ENCODE measurements at regions of chr17 and their contacts with region 1.

Region 1: GRCh38 chr17:75601057-75602051 is 13.8 kb downstream of the MYO15B start:
- DNase-seq: peak; percentile 30
- H3K4me3 ChIP-seq: no peak overlapping the region
- H3K27ac ChIP-seq: no peak overlapping the region
- H3K4me1 ChIP-seq: no peaks in the 10 kb centered on the region
- H3K27me3 ChIP-seq: no peaks in the 10 kb centered on the region
- CTCF ChIP-seq: peak; percentile 61 to 81
- POLR2A ChIP-seq: no peak

Region 2: GRCh38 chr17:75509528-75510258 is 91.7 kb before region 1 on chr17:
- CTCF ChIA-PET with region 1: no interaction called
- POLR2A ChIA-PET with region 1: no interaction called
- dilution Hi-C with region 1: no loop called
- intact Hi-C with region 1: no loop called
- DNase-seq: peak; percentile 32
- H3K4me3 ChIP-seq: no peak overlapping the region
- H3K27ac ChIP-seq: peak overlapping the region; percentile 22
- H3K4me1 ChIP-seq: peaks cover 53% of the 10 kb centered on the region
- H3K27me3 ChIP-seq: no peaks in the 10 kb centered on the region
- CTCF ChIP-seq: no peak
- POLR2A ChIP-seq: no peak

Region 3: GRCh38 chr17:75589012-75589918 is 12.1 kb before region 1 on chr17:
- CTCF ChIA-PET with region 1: interaction called, 29 read pairs
- POLR2A ChIA-PET with region 1: interaction called, 3 read pairs
- dilution Hi-C with region 1: no loop called
- intact Hi-C with region 1: no loop called
- DNase-seq: peak; percentile 74
- H3K4me3 ChIP-seq: peak overlapping the region in 2 of 3 experiments; percentile 48 to 55
- H3K27ac ChIP-seq: peak overlapping the region; percentile 68
- H3K4me1 ChIP-seq: peaks cover 3% of the 10 kb centered on the region
- H3K27me3 ChIP-seq: no peaks in the 10 kb centered on the region
- CTCF ChIP-seq: peak; percentile 38 to 47
- POLR2A ChIP-seq: peak; percentile 42

Region 4: DNA sequence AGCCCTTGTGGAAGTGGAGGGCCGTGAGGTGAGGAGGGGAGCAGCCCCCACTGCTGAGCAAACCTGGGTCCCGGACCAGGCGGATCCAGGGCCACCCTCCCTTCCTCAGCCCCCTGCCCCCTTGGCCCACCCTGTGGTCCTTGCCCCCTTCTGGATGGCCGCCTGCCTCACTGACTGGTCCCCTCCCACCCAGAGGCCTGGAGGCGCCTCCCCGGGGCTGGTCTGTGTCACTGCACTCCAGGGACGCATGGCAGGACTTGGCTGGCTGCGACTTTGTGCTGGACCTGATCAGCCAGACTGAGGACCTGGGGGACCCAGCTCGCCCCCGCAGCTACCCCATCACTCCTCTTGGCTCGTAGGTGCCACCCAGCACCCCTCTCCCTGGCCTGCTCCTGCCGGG is 12.7 kb after region 1 on chr17:
- CTCF ChIA-PET with region 1: interaction called, 22 read pairs
- POLR2A ChIA-PET with region 1: interaction called, 10 read pairs
- dilution Hi-C with region 1: no loop called
- intact Hi-C with region 1: no loop called
- DNase-seq: no peak
- H3K4me3 ChIP-seq: no peak overlapping the region
- H3K27ac ChIP-seq: no peak overlapping the region
- H3K4me1 ChIP-seq: no peaks in the 10 kb centered on the region
- H3K27me3 ChIP-seq: no peaks in the 10 kb centered on the region
- CTCF ChIP-seq: peak in 1 of 2 donors; percentile 9
- POLR2A ChIP-seq: no peak

Region 5: GRCh38 chr17:75619506-75620431 is 18.4 kb after region 1 on chr17:
- CTCF ChIA-PET with region 1: interaction called, 22 read pairs
- POLR2A ChIA-PET with region 1: interaction called, 10 read pairs
- dilution Hi-C with region 1: no loop called
- intact Hi-C with region 1: no loop called
- DNase-seq: peak; percentile 32
- H3K4me3 ChIP-seq: no peak overlapping the region
- H3K27ac ChIP-seq: no peak overlapping the region
- H3K4me1 ChIP-seq: no peaks in the 10 kb centered on the region
- H3K27me3 ChIP-seq: no peaks in the 10 kb centered on the region
- CTCF ChIP-seq: peak; percentile 56 to 81
- POLR2A ChIP-seq: no peak

Region 6: DNA sequence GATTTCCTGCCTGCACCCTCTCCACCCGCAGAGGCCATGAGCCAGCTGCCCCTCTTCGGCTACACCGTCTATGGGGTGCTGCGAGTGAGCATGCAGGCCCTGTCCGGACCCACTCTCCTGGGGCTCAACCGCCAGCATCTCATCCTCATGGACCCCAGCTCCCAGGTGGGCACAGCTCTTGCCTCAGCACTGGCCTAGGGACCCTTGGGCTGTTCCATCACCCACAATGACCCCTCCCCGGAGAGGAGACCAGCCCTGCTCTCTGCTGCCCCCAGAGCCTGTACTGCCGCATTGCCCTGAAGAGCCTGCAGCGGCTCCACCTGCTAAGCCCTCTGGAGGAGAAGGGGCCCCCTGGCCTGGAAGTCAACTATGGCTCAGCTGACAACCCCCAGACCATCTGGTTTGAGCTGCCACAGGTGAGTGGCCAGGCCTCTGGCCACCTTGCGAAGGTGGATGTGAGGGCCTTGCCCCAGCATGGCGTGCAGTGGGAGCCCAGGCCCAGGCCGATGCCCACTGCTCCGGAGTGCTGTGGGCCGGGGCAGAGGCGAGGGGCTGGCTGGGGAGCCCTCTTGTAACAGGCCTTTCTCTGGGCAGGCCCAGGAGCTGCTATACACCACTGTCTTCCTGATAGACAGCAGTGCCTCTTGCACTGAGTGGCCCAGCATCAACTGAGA is 24.6 kb after region 1 on chr17:
- CTCF ChIA-PET with region 1: interaction called, 22 read pairs
- POLR2A ChIA-PET with region 1: no interaction called
- dilution Hi-C with region 1: no loop called
- intact Hi-C with region 1: no loop called
- DNase-seq: peak; percentile 15
- H3K4me3 ChIP-seq: no peak overlapping the region
- H3K27ac ChIP-seq: no peak overlapping the region
- H3K4me1 ChIP-seq: no peaks in the 10 kb centered on the region
- H3K27me3 ChIP-seq: no peaks in the 10 kb centered on the region
- CTCF ChIP-seq: peak; percentile 50 to 80
- POLR2A ChIP-seq: no peak

Region 7: DNA sequence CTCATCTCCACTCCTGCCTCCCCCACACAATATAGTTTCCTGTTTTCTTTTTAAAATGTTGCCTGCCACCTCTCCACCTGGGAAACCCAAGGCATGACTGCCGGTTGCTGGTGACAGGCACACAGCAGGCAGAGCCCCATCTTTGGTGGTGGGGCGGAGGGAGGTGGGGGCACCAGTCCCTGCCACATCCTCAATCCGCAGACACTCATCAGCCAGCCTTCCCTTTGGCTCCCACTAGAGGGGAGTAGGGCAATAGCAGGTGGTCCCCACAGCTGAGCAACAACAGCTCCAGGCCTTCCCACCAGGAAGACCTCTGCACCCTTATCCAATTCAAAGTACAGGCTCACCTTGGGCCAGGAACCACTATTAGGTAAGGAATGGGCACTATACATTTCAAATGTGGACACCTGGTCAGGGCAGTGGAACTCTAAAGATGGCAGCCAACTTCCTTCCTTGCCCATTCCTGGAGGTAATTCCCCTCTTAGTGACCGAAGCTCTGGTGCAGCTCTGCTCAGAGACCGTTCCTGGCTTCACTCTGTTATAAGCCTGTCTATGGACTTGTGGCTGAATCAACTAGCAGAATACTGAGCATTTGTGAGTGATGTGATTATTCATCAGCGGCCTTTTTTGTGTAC is 51.7 kb after region 1 on chr17:
- CTCF ChIA-PET with region 1: interaction called, 15 read pairs
- POLR2A ChIA-PET with region 1: interaction called, 5 read pairs
- dilution Hi-C with region 1: no loop called
- intact Hi-C with region 1: no loop called
- DNase-seq: peak; percentile 56
- H3K4me3 ChIP-seq: no peak overlapping the region
- H3K27ac ChIP-seq: no peak overlapping the region
- H3K4me1 ChIP-seq: peaks cover 8% of the 10 kb centered on the region
- H3K27me3 ChIP-seq: no peaks in the 10 kb centered on the region
- CTCF ChIP-seq: peak; percentile 77 to 86
- POLR2A ChIP-seq: no peak

Measured in endothelial cell of umbilical vein (primary cell).